HCT116 (cell line): ENCODE measurements at regions of chr3 and their contacts with region 1.

Region 1: GRCh38 chr3:98329392-98330124 is 24.1 kb upstream of the OR5K4 start:
- DNase-seq: peak; percentile 33
- ATAC-seq: peak; percentile 80
- H3K4me3 ChIP-seq: no peak overlapping the region
- H3K27ac ChIP-seq: no peak overlapping the region
- H3K4me1 ChIP-seq: peaks cover 0 to 11% of the 10 kb centered on the region in 2 experiments; a peak in 2 of 4 replicates
- H3K27me3 ChIP-seq: 0 out of 2 replicates have a peak, but pooled peaks cover 4% of the 10 kb centered on the region
- CTCF ChIP-seq: peak; percentile 70 to 80 (median 77)
- POLR2A ChIP-seq: no peak
- RAD21 ChIP-seq: peak; percentile 81

Region 2: DNA sequence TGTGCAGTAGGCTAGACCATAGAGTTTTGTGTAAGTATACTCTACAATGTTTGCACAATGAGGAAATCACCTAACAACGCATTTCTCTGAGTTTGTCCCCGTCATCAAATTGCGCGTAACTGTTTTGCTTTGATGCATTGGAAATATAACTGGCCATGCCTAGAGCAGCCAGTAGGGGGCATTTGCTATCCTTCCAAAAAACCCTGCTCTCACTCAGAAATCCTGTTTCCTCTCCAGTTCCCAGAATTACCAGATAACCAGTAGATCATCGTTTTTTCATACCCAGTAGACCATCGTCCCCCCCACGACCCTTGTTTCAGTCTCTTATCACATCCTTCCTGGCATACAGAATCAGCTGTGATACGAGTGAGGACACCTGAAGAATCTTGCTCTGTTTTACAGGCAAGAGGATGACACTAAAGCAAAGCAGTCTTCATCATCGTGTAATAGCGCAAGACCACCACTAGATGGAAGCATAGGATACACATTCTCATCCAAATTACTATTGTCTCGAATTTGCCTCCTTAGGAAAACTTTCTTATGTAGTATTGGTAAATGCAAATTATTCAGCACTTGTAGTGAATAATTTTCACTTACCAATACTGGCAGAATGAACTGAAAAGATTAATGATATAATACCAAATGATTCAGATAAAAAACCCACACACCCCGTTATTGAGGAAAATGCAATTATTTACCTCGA is 290.1 kb before region 1 on chr3:
- CTCF ChIA-PET with region 1: interaction called, 43 read pairs
- POLR2A ChIA-PET with region 1: no interaction called
- RAD21 ChIA-PET with region 1: interaction called in 1 of 2 experiments, 5 read pairs
- intact Hi-C with region 1: loop called (anchors 1 kb)
- DNase-seq: peak; percentile 89
- ATAC-seq: peak; percentile 91
- H3K4me3 ChIP-seq: peak overlapping the region; percentile 26 to 49
- H3K27ac ChIP-seq: no peak overlapping the region
- H3K4me1 ChIP-seq: peaks cover 0 to 8% of the 10 kb centered on the region in 2 experiments; a peak in 2 of 4 replicates
- H3K27me3 ChIP-seq: no peaks in the 10 kb centered on the region
- CTCF ChIP-seq: peak; percentile 77 to 97 (median 92)
- POLR2A ChIP-seq: no peak
- RAD21 ChIP-seq: peak; percentile 81

Region 3: DNA sequence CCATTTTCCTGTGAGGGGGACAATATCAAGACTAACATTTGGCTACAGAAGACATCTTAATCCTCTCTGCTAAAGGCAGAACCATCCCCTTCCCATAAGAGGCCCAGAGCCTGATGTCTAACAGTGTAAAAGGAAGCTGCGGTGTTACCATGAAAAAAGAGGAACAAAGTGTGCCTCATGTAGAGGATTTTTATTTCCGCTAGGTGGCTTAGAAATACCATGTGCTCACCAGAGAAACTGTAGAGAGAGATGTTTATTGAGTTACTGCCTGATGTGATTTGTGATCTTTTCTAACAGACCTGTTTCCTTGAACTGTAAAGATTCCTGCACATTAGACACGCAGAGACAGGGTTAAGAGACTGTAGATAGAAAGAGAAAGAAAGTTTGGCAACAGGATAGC is 141.0 kb before region 1 on chr3:
- CTCF ChIA-PET with region 1: interaction called, 4 read pairs
- POLR2A ChIA-PET with region 1: no interaction called
- RAD21 ChIA-PET with region 1: no interaction called
- intact Hi-C with region 1: loop called (anchors 2 kb)
- DNase-seq: peak; percentile 7
- ATAC-seq: peak; percentile 80
- H3K4me3 ChIP-seq: no peak overlapping the region
- H3K27ac ChIP-seq: no peak overlapping the region
- H3K4me1 ChIP-seq: no peaks in the 10 kb centered on the region
- H3K27me3 ChIP-seq: no peaks in the 10 kb centered on the region
- CTCF ChIP-seq: peak; percentile 5 to 41 (median 40); a peak in 4 of 6 replicates
- POLR2A ChIP-seq: no peak
- RAD21 ChIP-seq: peak; percentile 28; the same call in 1 of the 2 replicates

Region 4: GRCh38 chr3:98588065-98588464 is 258.5 kb after region 1 on chr3:
- CTCF ChIA-PET with region 1: interaction called, 4 read pairs
- POLR2A ChIA-PET with region 1: no interaction called
- RAD21 ChIA-PET with region 1: no interaction called
- intact Hi-C with region 1: loop called (anchors 5 kb)
- DNase-seq: no peak
- ATAC-seq: no peak
- H3K4me3 ChIP-seq: no peak overlapping the region
- H3K27ac ChIP-seq: peak overlapping the region; percentile 93; the same call in 1 of the 2 replicates
- H3K4me1 ChIP-seq: peaks cover 75 to 91% of the 10 kb centered on the region in 2 experiments
- H3K27me3 ChIP-seq: no peaks in the 10 kb centered on the region
- CTCF ChIP-seq: peak; percentile 37 to 70 (median 64); a peak in 5 of 6 replicates
- POLR2A ChIP-seq: no peak
- RAD21 ChIP-seq: peak; percentile 64